ENCODE measurements at regions of chr10 and their contacts with region 1.

Region 1: DNA sequence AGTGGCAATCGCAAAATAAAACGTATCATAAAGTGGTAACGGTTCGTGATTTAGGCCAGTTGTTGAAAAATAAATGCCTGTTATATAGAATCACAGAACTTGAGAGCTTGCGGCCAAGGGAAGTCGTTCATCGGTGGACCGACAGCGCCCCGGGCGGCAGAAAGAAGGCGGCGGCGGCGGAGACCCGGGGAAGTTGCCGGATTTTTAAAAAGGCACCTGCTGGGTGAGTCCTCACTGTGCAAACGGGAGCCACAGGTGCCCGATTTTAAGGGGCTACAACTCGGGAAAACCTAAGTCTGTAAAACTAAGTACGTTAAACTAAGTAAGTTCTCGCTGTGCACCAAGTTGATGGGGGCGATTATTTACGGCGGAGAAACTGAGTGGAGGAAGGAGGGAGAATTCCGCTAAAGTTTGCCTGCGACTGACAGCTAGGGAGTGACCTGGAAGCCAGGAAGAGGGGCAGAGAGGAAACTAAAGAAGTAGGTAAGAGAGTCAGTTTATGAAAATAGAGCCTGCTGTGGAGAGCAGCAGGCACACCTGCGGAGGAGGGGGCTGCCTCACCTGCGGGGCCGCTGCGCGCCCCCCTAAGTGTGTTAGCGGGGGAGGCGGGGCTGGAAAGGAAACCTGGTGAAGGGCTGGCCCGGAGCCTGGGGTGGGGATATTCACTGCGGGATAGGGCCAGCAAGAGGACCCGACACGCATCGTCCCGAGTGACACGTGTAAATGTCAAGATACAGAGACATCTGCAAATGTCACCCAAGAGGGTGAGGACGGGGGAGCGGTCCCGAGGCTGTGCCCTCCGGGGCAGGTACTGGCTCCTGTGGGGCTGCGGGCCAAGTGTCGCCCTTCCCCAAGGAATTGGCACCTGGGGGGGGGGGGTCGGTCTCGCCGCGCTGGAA is 1.0 kb downstream of the ADAM12 start:
- DNase-seq: peak; percentile 19 to 82 (median 70)
- H3K4me3 ChIP-seq: peak overlapping the region; percentile 43 to 77 (median 62)
- H3K27ac ChIP-seq: peak overlapping the region in 8 of 59 donors; percentile 11 to 62 (median 38)
- H3K27me3 ChIP-seq: peaks cover 0 to 5% (median 0%) of the 10 kb centered on the region in 45 donors
- CTCF ChIP-seq: peak; percentile 56 to 90 (median 81)

Region 2: DNA sequence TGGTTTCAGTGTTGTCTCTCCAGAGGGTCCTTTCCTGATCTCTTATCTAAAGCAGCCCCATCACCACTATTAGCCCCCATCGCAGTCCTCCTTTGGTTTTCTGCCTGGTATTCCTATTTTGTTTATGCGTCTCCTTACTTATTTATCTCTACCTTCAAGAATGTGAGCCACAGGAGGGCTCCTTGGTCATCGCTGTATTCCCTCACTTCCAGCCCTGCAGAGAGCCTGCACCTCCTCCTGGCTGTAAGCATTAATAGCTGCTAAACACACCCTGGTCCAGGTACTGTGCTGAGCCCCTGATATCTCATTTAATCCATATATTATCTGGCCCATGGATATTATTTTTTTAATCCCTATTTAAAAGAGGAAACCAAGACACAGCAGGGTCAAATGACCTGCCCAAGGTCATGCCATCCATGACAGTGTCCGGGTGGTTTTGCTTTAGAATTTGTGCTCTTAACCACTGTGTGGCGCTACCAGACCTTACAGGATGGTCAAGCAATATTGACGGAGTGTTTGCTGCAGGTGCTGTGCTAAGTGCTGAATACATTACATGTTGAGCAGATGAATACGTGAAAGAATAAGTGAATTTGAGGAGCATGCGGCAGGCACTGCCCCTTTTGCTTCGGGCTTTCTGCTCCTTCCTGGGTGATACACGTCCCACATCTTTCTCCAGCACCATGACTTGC is 226.2 kb before region 1 on chr10:
- intact Hi-C with region 1: loop called in 1 of 2 experiments (anchors 10 kb)
- DNase-seq: no peak
- H3K4me3 ChIP-seq: no peak overlapping the region
- H3K27ac ChIP-seq: no peak overlapping the region
- H3K27me3 ChIP-seq: peaks cover 0 to 6% (median 0%) of the 10 kb centered on the region in 45 donors
- CTCF ChIP-seq: peak in 11 of 56 donors; percentile 7 to 53 (median 24)

Region 3: GRCh38 chr10:126247446-126247975 is 139.8 kb before region 1 on chr10:
- intact Hi-C with region 1: loop called in 1 of 2 experiments (anchors 10 kb)
- DNase-seq: no peak
- H3K4me3 ChIP-seq: no peak overlapping the region
- H3K27ac ChIP-seq: peak overlapping the region in 4 of 59 donors; percentile 5 to 61 (median 33)
- H3K27me3 ChIP-seq: no peaks in the 10 kb centered on the region
- CTCF ChIP-seq: no peak

Measured in dorsolateral prefrontal cortex (tissue), 120 donors.